Natural killer cell (primary cell): ENCODE measurements at regions of chr14 and their contacts with region 1.

Region 1: GRCh38 chr14:35336494-35337268 is 44.5 kb downstream of the PSMA6 start:
- DNase-seq: no peak
- ATAC-seq: no peak
- H3K4me3 ChIP-seq: no peak overlapping the region
- H3K4me3 Mint-ChIP-seq: peak overlapping the region; percentile 70
- H3K27ac ChIP-seq: no peak overlapping the region
- H3K27ac Mint-ChIP-seq: peak overlapping the region; percentile 79 to 85
- H3K4me1 ChIP-seq: peaks cover 73% of the 10 kb centered on the region
- H3K4me1 Mint-ChIP-seq: peaks cover 33 to 53% of the 10 kb centered on the region in 2 donors
- H3K27me3 ChIP-seq: no peaks in the 10 kb centered on the region
- H3K27me3 Mint-ChIP-seq: no peaks in the 10 kb centered on the region
- CTCF ChIP-seq: no peak

Region 2: GRCh38 chr14:35292051-35292769 is 44.5 kb before region 1 on chr14 and contains the start of gene PSMA6:
- intact Hi-C with region 1: loop called (anchors 5 kb)
- DNase-seq: peak; percentile 96 to 100
- ATAC-seq: peak; percentile 91 to 97 (median 92)
- H3K4me3 ChIP-seq: peak within 1 kb of the TSS; percentile 63
- H3K4me3 Mint-ChIP-seq: peak within 1 kb of the TSS; percentile 97
- H3K27ac ChIP-seq: peak within 1 kb of the TSS; percentile 81
- H3K27ac Mint-ChIP-seq: peak within 1 kb of the TSS; percentile 98 to 99
- H3K4me1 ChIP-seq: peaks cover 31% of the 10 kb centered on the region
- H3K4me1 Mint-ChIP-seq: peaks cover 43 to 45% of the 10 kb centered on the region in 2 donors
- H3K27me3 ChIP-seq: no peaks in the 10 kb centered on the region
- H3K27me3 Mint-ChIP-seq: no peaks in the 10 kb centered on the region
- CTCF ChIP-seq: no peak
- total RNA-seq, gene PSMA6: 130 to 141 (median 139) TPM

Region 3: DNA sequence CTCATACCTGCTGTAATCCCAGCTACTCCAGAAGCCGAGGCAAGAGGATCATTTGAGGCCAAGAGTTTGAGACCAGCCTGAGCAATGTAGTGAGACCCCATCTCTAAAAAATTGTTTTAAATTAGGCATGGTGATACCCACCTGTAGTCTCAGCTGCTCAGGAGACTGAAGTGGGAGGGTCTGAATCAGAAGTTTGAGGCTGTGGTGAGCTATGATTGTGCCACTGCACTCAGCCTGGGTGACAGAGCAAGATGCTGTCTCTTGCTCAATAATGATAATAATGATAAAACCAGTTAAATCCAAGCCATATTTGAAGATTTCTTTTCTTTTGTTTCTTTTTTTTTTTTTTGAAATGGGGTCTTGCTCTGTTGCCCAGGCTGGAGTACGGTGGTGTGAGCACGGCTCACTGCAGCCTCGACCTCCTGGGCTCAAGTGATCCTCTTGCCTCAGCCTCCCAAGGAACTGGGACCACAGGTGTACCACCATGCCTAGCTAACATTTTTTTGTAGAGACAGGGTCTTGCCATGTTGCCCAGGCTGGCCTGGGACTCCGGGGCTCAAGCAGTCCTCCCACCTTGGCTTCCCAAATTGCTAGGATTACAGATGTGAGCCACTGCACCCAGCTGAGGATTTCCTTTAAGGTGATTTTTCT is 31.7 kb before region 1 on chr14:
- intact Hi-C with region 1: no loop called
- DNase-seq: no peak
- ATAC-seq: peak in 1 of 3 donors; percentile 43
- H3K4me3 ChIP-seq: no peak overlapping the region
- H3K4me3 Mint-ChIP-seq: no peak overlapping the region
- H3K27ac ChIP-seq: no peak overlapping the region
- H3K27ac Mint-ChIP-seq: no peak overlapping the region
- H3K4me1 ChIP-seq: peaks cover 17% of the 10 kb centered on the region
- H3K4me1 Mint-ChIP-seq: peaks cover 36 to 38% of the 10 kb centered on the region in 2 donors
- H3K27me3 ChIP-seq: no peaks in the 10 kb centered on the region
- H3K27me3 Mint-ChIP-seq: no peaks in the 10 kb centered on the region
- CTCF ChIP-seq: no peak

Region 4: DNA sequence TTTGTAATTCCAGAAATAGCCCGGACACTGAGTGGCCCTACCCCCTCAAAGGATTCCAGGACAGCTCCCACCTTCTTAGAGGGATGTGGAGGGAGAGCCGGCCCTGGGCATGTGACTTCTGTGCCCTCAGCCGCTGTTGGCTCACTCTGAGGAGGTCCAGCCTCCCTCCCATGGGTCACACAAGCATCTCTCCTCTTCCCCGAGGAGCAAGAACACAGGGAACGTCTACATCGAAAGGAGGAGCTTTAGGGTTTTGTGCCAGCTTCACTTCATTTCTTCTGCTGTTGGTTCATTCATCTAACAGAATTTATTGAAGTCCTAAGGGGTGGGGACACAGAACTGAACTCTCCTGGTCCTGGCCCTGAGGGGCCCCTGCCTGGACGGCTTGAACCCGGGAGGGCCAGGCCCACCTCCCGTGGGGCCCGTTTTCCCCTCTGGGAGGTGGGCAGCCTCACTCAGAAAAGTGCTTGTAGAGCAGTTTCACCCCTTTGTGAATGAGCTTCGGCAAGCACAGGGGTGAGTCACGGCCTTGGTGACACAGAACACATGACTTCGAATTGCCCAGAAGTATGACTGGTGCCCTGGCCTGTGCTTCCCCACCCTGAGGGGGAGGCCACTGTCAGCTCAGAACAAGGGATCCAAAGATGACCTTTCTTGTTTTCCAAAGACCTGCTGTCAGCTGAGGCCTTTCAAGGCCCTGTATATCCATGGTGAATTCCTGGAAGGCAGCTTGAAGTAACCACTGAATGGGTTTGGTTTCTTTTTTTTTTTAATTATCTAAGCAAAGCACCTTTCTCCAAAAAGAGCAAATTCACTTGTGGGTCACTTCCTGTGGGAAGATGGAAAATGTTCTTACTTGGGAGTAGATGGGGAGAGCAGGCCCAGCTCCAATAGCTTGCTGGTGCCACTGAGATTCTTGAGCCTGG is 28.7 kb after region 1 on chr14:
- intact Hi-C with region 1: loop called (anchors 5 kb)
- DNase-seq: peak; percentile 28 to 39
- ATAC-seq: peak; percentile 53 to 80 (median 78)
- H3K4me3 ChIP-seq: no peak overlapping the region
- H3K4me3 Mint-ChIP-seq: no peak overlapping the region
- H3K27ac ChIP-seq: peak overlapping the region; percentile 33
- H3K27ac Mint-ChIP-seq: peak overlapping the region in 1 of 2 donors; percentile 58
- H3K4me1 ChIP-seq: peaks cover 38% of the 10 kb centered on the region
- H3K4me1 Mint-ChIP-seq: peaks cover 24% of the 10 kb centered on the region in 2 donors
- H3K27me3 ChIP-seq: no peaks in the 10 kb centered on the region
- H3K27me3 Mint-ChIP-seq: peaks cover 0 to 2% of the 10 kb centered on the region in 2 donors
- CTCF ChIP-seq: no peak